Calu3 (cell line): ENCODE measurements at regions of chr17 and their contacts with region 1.

Region 1: DNA sequence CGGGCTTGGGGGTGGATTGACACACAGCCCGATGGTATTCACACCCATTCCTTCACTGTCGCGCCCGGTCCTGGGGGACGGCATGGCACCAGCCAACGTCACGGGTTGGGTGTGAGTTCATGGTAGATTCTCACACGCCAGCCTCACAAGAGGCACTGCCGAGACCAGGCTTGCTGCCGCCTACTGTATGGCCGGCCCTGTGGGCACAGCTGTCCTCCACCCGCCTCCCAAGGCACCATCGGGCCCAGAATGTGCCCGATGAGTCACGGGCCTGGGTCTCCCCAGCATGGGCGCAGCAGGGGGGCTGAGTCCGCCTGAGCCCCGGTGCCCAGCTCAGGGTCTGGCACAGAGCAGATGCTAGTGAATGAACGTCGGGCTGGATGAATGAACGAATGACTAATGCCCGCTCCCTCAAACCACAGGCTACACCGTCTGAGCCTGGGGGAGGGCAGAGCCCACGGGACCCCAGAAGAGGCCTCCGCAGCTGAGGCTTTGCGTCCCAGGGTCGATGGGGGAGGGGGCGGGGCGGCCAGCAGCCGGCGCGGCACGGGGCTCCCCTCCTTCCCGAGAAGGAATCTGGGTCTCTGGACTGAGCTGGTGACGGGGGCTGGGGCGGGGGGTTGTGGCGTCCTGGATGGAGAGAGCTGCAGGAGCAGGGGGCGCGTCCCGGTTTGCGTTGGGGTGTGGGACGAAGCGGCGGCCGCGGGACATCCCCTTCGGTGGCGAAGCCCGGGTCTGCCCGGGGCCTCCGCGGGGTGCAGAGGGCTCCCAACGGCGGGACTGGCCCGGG is 829 bp downstream of the PITPNM3 start:
- DNase-seq: peak; percentile 53
- H3K4me3 Mint-ChIP-seq: peak overlapping the region; percentile 78
- H3K27ac Mint-ChIP-seq: peak overlapping the region; percentile 94
- H3K4me1 Mint-ChIP-seq: peaks cover 29% of the 10 kb centered on the region
- H3K27me3 Mint-ChIP-seq: peaks cover 7% of the 10 kb centered on the region
- CTCF ChIP-seq: no peak

Region 2: DNA sequence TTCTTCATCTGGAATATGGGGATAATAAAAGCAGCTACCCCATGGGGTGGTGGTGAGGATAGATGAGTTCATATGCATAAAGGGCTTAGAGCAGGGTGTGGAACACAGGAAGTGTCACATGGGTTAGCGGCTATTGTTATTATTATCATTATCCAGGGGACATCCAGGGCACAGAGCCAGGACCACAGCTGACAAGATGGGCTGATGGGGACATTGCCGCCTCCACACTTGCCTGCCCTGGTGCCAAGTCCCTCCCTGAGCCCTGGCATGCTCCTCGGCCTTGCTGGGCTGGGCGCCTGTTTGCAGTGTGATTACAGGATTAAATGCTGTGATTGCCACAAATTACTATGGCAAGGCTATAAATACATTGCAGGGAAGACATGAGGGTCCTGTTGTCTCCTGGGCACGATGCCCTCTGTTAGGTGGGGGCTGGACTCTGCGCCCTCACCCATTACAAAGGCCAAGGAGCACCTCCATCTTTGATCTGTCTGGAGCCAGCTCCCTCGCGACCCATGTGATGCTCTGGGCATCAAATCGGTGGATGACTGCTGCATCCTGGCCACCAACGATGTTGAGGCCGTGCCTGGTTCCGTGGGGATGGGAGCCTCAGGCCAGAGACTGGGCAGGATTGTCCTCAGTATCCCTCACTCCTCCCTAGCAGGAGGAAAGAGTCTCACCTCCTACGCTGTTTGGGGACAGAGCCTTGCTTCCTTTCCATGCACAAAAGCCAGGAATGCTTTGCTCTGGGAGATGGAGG is 68.1 kb before region 1 on chr17:
- CTCF ChIA-PET with region 1: no interaction called
- intact Hi-C with region 1: no loop called
- DNase-seq: no peak
- H3K4me3 Mint-ChIP-seq: no peak overlapping the region
- H3K27ac Mint-ChIP-seq: no peak overlapping the region
- H3K4me1 Mint-ChIP-seq: no peaks in the 10 kb centered on the region
- H3K27me3 Mint-ChIP-seq: no peaks in the 10 kb centered on the region
- CTCF ChIP-seq: no peak

Region 3: DNA sequence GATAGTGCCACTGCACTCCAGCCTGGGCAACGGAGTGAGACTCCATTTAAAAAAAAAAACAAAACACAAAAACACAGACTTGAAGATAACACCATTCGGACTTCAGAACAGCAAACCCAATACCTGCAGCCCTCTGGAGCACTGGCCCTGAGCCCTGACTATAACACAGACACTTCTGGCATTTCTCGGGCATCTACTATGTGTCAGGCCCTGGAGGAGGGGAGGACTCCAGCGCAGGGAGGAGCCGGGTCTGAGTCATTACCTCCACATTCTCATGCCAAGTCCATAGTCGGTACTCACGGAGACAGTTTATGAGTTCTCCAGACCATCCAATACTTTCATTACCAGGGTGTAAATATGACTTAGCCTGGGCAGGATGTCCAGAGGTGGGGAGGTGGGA is 48.0 kb before region 1 on chr17:
- CTCF ChIA-PET with region 1: no interaction called
- intact Hi-C with region 1: loop called (anchors 5 kb)
- DNase-seq: peak; percentile 64
- H3K4me3 Mint-ChIP-seq: peak overlapping the region; percentile 46
- H3K27ac Mint-ChIP-seq: peak overlapping the region; percentile 79
- H3K4me1 Mint-ChIP-seq: peaks cover 30% of the 10 kb centered on the region
- H3K27me3 Mint-ChIP-seq: no peaks in the 10 kb centered on the region
- CTCF ChIP-seq: no peak

Region 4: DNA sequence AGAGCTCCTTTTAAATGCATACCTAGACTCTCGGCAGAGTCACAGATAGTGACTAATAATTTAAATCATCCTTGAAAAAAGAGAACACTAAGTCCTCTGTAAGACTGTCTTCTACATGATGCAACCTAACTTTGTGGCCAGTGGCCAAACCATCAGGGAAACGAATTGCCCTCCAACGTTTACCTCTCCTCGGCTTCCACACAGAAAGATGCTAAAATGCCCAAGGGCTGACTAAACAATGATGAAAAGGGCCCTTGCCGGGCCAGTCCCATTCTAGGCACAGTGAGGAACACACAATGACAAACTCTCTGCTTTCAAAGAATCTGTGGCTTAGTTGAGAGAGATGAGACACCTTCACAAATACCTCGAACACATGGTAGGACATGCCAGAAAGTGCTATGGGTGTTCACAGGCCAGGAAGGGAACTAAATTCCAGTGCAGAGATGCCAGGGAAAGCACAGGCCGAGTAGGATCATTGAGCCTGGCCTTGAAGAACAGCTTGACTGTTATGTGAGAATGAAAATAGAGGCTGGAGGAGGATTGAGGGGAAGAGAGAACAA is 36.2 kb after region 1 on chr17:
- CTCF ChIA-PET with region 1: no interaction called
- intact Hi-C with region 1: loop called (anchors 5 kb)
- DNase-seq: peak; percentile 32
- H3K4me3 Mint-ChIP-seq: peak overlapping the region; percentile 49
- H3K27ac Mint-ChIP-seq: peak overlapping the region; percentile 94
- H3K4me1 Mint-ChIP-seq: peaks cover 24% of the 10 kb centered on the region
- H3K27me3 Mint-ChIP-seq: no peaks in the 10 kb centered on the region
- CTCF ChIP-seq: no peak

Region 5: GRCh38 chr17:6753006-6753445 is 197.5 kb after region 1 on chr17:
- CTCF ChIA-PET with region 1: no interaction called
- intact Hi-C with region 1: no loop called
- DNase-seq: no peak
- H3K4me3 Mint-ChIP-seq: no peak overlapping the region
- H3K27ac Mint-ChIP-seq: peak overlapping the region; percentile 73
- H3K4me1 Mint-ChIP-seq: peaks cover 25% of the 10 kb centered on the region
- H3K27me3 Mint-ChIP-seq: peaks cover 6% of the 10 kb centered on the region
- CTCF ChIP-seq: no peak